Calu3 (cell line): ENCODE measurements at regions of chr5 and their contacts with region 1.

Region 1: GRCh38 chr5:160199410-160199911 is 29.8 kb upstream of the FABP6 start:
- DNase-seq: peak; percentile 92
- H3K4me3 Mint-ChIP-seq: peak overlapping the region; percentile 68
- H3K27ac Mint-ChIP-seq: peak overlapping the region; percentile 38
- H3K4me1 Mint-ChIP-seq: no peaks in the 10 kb centered on the region
- H3K27me3 Mint-ChIP-seq: no peaks in the 10 kb centered on the region
- CTCF ChIP-seq: peak; percentile 98

Region 2: DNA sequence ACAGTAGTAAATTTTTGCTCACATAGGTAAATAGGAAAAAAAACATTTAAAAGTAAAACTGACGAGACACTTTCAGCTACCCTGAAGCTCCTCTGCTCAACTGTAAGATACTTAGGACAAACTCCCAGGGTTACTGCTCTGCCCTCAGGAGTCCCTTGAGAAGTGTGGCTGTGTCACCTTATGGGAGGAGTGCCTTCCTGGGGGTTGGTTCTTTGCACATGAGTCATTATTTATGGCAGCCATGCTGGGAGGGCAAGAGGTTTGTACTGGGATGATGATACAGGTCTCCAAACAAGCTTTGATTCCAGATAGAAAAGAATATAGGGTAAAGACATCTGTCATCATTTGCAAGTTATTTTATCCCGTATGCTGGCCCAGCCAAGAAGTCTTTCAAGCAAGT is 144.6 kb before region 1 on chr5:
- CTCF ChIA-PET with region 1: no interaction called
- intact Hi-C with region 1: no loop called
- DNase-seq: no peak
- H3K4me3 Mint-ChIP-seq: no peak overlapping the region
- H3K27ac Mint-ChIP-seq: no peak overlapping the region
- H3K4me1 Mint-ChIP-seq: no peaks in the 10 kb centered on the region
- H3K27me3 Mint-ChIP-seq: no peaks in the 10 kb centered on the region
- CTCF ChIP-seq: no peak

Region 3: DNA sequence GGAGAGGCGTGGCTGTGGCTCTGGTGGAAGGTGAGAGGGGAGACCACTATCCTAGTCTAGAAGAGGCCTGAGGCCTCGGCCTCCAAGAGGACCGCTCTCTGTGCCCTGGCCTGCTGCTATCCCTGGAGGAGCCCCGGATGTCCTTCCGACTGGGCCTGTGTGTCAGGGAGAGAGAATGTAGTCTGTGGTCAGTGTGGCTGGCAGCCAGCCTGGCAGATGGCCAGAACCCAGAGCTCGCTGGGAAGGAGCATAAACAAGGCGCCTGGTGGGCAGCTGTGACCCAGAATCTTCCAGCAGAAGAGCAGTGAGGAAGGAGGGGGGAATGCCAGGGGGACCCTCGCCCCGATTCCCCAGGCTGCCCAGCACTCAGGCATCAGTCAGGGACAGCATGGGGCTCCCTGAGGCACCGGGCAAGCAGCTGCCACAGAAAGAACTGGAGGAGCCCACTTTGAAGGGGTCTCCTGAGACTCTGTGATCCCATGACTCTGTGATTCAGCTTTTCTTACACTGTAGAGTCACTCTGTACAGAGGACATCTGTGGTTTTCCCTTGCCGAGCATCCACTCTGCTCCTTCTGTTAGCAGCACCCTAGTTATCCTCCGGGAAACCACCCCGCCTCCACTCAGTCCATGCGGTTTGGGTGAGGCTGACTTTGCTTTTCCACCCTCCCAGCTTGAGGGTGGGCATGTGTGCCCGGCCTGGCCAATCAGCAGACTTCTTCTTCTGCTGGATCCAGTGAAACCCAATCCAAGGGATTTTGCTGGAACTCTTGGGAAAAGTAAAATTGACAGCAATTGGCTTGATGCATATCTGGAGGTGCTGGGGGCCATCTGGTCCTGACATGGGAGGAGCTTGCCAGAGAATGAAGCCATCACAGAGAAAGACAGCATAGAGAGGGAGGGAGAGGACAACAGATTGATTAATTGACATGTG is 34.1 kb before region 1 on chr5:
- CTCF ChIA-PET with region 1: no interaction called
- intact Hi-C with region 1: no loop called
- DNase-seq: peak; percentile 96
- H3K4me3 Mint-ChIP-seq: peak overlapping the region; percentile 60
- H3K27ac Mint-ChIP-seq: peak overlapping the region; percentile 92
- H3K4me1 Mint-ChIP-seq: peaks cover 39% of the 10 kb centered on the region
- H3K27me3 Mint-ChIP-seq: no peaks in the 10 kb centered on the region
- CTCF ChIP-seq: no peak

Region 4: DNA sequence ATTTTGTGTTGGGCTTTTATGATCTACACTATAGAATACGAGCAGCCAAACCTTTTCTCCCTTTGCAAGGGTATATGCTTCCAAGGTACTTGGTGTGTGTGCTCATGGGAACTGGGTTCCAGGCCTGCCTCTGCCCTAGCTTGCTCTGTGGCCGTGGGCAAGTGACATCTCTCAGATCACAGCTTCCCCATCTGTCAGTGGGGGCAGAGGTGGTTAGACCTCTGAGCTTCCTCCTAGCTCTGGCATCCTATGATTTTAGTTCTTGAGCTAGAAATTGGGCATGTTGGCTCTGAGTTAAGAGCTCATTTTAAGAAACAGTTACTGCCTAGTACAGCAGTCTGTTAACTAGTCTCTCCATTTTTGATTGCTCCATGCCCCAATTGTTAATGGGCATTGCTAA is 125.4 kb after region 1 on chr5:
- CTCF ChIA-PET with region 1: no interaction called
- intact Hi-C with region 1: no loop called
- DNase-seq: no peak
- H3K4me3 Mint-ChIP-seq: no peak overlapping the region
- H3K27ac Mint-ChIP-seq: no peak overlapping the region
- H3K4me1 Mint-ChIP-seq: no peaks in the 10 kb centered on the region
- H3K27me3 Mint-ChIP-seq: no peaks in the 10 kb centered on the region
- CTCF ChIP-seq: no peak

Region 5: GRCh38 chr5:160390787-160391696 is 191.6 kb after region 1 on chr5:
- CTCF ChIA-PET with region 1: interaction called, 4 read pairs
- intact Hi-C with region 1: loop called (anchors 1 kb)
- DNase-seq: no peak
- H3K4me3 Mint-ChIP-seq: no peak overlapping the region
- H3K27ac Mint-ChIP-seq: no peak overlapping the region
- H3K4me1 Mint-ChIP-seq: no peaks in the 10 kb centered on the region
- H3K27me3 Mint-ChIP-seq: no peaks in the 10 kb centered on the region
- CTCF ChIP-seq: no peak